H1 (cell line): ENCODE measurements at regions of chr6 and their contacts with region 1.

Region 1: DNA sequence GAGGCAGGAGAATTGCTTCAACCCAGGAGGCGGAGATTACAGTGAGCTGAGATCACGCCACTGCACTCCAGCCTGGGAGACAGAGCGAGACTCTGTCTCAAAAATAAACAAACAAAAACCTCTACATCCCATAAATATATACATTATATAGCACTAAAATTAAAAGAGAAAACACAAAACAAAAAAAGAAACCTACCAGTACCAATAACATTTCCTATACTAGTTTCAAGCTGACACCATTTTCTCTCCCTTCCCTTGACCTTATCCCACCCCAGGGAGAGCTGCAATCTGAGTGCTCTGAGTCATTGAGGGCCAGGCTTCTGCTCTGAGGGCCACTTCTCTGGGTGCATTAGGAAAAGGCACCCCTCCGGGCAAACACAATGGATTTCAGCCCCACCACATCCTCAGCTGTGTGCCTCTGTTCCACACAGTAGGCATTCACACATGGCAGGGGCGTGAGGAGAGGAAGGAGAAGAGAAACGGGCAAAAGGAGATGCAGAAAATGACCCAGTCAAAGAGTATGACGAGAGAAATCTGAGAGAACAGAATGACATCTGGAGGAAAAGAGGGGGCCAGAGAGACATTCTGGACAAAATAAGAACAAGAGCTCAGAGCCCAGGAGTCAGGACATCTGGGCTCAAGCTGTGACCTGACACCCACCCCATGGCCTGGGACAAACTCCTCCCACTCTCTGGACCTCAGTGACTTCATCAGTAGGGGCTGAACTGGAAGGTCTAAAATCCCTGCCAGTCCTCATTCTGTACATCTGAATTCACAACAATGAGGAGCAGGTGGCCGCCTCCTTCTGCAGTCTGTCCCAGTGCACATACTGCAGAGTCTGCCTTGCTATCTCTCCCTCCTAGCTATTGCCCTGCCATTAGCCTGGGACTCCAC is 18.2 kb downstream of the TRIM26 start:
- DNase-seq: no peak
- H3K4me3 ChIP-seq: no peak overlapping the region
- H3K27ac ChIP-seq: no peak overlapping the region
- H3K4me1 ChIP-seq: no peaks in the 10 kb centered on the region
- H3K27me3 ChIP-seq: no peaks in the 10 kb centered on the region
- CTCF ChIP-seq: no peak
- EP300 ChIP-seq: no peak
- POLR2A ChIP-seq: no peak
- RAD21 ChIP-seq: no peak

Region 2: DNA sequence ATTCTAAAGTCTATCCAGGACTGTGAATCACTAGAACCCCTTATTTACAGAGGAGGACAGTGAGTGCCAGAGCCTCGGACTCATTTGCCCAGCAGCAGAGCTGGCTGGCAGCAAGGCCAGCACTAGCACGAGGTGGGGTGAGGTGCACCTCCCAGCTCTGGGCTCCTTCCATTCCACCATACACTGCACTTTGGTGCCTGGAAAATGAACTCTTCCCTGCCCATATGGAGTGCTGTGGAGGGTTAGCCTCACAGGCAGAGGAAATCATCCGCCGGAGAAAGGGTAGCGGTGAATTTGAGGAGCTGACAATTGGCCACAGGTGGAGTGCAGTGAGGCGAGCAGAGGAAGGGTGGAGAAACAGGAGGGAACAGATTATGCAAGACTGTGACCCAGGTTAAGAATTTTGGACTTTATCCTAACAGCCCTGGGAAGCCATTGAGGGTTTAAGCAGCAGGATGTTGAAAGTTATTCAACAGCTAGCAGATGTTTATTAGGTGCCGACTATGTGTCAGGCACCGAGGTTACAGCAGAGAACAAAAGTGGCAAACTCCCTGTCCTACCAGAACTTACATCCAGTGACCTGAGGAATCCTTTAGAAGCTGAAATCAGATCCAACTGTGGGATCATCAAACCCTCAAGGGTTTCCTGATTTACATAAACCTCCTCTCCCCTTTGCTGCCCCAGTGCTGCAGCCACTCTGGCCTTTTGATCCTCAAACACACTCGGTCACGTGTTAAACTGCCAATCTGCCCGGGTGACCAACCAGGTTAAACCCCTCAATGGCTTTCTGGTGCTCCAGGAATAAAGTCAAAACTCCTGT is 12.0 kb after region 1 on chr6:
- CTCF ChIA-PET with region 1: interaction called, 4 read pairs
- POLR2A ChIA-PET with region 1: interaction called, 18 read pairs
- DNase-seq: no peak
- H3K4me3 ChIP-seq: no peak overlapping the region
- H3K27ac ChIP-seq: no peak overlapping the region
- H3K4me1 ChIP-seq: peaks cover 3 to 20% (median 12%) of the 10 kb centered on the region in 4 experiments
- H3K27me3 ChIP-seq: no peaks in the 10 kb centered on the region
- CTCF ChIP-seq: no peak
- EP300 ChIP-seq: no peak
- POLR2A ChIP-seq: 0 out of 3 replicates have a peak, but pooled peaks of 1 of the 2 experiments have one; percentile 18
- RAD21 ChIP-seq: no peak